T-cell (primary cell): ENCODE measurements at regions of chr9 and their contacts with region 1.

Region 1: GRCh38 chr9:137223078-137223970 is 1.3 kb upstream of the RNF208 start:
- DNase-seq: peak; percentile 94 to 99 (median 98)
- ATAC-seq: peak; percentile 91 to 94 (median 92)
- H3K4me3 ChIP-seq: peak overlapping the region; percentile 76 to 79
- H3K4me3 Mint-ChIP-seq: peak overlapping the region; percentile 71 to 80 (median 79)
- H3K27ac ChIP-seq: peak overlapping the region; percentile 83
- H3K27ac Mint-ChIP-seq: peak overlapping the region; percentile 67 to 80
- H3K4me1 ChIP-seq: peaks cover 2 to 37% of the 10 kb centered on the region in 2 experiments
- H3K4me1 Mint-ChIP-seq: peaks cover 6 to 8% (median 7%) of the 10 kb centered on the region in 3 donors
- H3K27me3 ChIP-seq: peaks cover 0 to 27% of the 10 kb centered on the region in 2 experiments
- H3K27me3 Mint-ChIP-seq: peaks cover 3 to 4% of the 10 kb centered on the region in 2 donors

Region 2: DNA sequence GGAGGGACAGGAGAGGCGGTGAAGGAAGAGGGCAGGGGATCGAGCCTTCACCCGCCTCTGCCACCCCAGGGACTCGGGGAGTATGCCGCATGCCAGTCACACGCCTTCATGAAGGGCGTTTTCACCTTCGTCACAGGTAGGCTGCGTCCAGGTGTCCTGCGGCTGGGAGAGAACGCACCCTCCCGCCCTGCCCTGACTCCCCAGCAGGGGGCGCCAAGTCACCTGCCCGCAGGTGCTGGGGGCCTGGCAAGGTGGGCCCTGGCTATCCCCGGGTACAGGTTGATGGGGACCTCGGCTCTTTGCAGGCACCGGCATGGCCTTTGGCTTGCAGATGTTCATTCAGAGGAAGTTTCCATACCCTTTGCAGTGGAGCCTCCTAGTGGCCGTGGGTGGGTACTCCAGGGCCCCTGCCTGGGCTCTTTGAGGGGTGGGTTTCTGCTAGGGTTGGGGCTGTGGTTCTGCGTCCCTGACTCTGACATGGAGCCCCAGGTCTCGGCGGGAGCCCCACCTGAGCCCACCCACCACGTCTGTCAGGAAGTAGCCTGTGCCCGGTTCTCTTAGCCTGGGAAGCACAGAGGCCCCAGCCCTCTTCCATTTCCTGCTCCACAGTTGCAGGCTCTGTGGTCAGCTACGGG is 431.6 kb before region 1 on chr9:
- CTCF ChIA-PET with region 1: no interaction called
- POLR2A ChIA-PET with region 1: interaction called in 1 of 2 experiments, 10 read pairs
- DNase-seq: peak; percentile 40 to 78 (median 63)
- ATAC-seq: peak; percentile 12 to 29 (median 16)
- H3K4me3 ChIP-seq: peak overlapping the region; percentile 75 to 86
- H3K4me3 Mint-ChIP-seq: peak overlapping the region; percentile 78 to 82 (median 80)
- H3K27ac ChIP-seq: peak overlapping the region; percentile 97
- H3K27ac Mint-ChIP-seq: peak overlapping the region; percentile 89 to 91
- H3K4me1 ChIP-seq: peaks cover 7 to 45% of the 10 kb centered on the region in 2 experiments
- H3K4me1 Mint-ChIP-seq: peaks cover 21 to 38% (median 30%) of the 10 kb centered on the region in 3 donors
- H3K27me3 ChIP-seq: no peaks in the 10 kb centered on the region
- H3K27me3 Mint-ChIP-seq: peaks cover 0 to 3% of the 10 kb centered on the region in 2 donors

Region 3: DNA sequence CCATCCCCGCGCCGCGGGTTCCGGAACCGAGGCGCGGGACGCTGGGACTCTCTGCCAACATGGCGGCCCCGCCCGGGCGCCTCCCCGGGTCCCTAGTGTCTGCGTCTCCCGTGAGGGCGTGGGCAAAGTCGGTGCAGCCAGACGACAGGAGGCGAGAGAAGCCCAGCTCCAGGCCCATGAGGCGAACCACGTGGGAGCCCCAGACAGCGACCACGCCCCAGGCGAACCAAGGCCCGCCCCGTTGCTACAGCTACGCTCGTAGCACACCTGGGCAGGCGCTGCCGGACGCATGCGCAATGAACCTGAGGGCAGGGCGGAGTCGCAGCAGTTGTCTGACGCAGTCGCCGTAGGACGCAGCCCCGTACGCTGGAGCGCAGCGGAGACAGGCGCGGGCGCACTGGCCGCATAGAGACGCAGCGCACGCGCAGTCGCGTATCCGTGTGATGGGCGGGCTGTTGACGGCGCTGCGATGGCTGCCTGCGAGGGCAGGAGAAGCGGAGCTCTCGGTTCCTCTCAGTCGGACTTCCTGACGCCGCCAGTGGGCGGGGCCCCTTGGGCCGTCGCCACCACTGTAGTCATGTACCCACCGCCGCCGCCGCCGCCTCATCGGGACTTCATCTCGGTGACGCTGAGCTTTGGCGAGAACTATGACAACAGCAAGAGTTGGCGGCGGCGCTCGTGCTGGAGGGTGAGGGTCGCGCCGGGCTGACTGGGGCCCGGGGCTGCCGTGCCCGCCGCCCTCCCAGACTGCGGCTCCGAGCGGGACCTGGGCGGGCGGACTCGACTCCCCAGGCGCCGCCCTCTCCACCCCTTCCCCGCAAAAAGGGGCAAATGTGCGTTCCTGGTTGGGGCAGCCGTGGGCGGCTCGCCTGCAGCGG is 136.6 kb before region 1 on chr9 and contains the start of gene MAN1B1:
- CTCF ChIA-PET with region 1: interaction called, 3 to 14 read pairs
- POLR2A ChIA-PET with region 1: no interaction called
- DNase-seq: peak; percentile 93 to 100 (median 99)
- ATAC-seq: peak; percentile 85 to 90 (median 86)
- H3K4me3 ChIP-seq: peak within 1 kb of the TSS; percentile 67 to 75
- H3K4me3 Mint-ChIP-seq: peak within 1 kb of the TSS; percentile 79 to 93 (median 89)
- H3K27ac ChIP-seq: peak within 1 kb of the TSS; percentile 78
- H3K27ac Mint-ChIP-seq: peak within 1 kb of the TSS; percentile 88 to 94
- H3K4me1 ChIP-seq: peaks cover 13 to 31% of the 10 kb centered on the region in 2 experiments
- H3K4me1 Mint-ChIP-seq: peaks cover 28 to 40% (median 32%) of the 10 kb centered on the region in 3 donors
- H3K27me3 ChIP-seq: peaks cover 0 to 3% of the 10 kb centered on the region in 2 experiments
- H3K27me3 Mint-ChIP-seq: no peaks in the 10 kb centered on the region
- total RNA-seq, gene MAN1B1: 62.0 to 91.5 (median 84.8) TPM

Region 4: DNA sequence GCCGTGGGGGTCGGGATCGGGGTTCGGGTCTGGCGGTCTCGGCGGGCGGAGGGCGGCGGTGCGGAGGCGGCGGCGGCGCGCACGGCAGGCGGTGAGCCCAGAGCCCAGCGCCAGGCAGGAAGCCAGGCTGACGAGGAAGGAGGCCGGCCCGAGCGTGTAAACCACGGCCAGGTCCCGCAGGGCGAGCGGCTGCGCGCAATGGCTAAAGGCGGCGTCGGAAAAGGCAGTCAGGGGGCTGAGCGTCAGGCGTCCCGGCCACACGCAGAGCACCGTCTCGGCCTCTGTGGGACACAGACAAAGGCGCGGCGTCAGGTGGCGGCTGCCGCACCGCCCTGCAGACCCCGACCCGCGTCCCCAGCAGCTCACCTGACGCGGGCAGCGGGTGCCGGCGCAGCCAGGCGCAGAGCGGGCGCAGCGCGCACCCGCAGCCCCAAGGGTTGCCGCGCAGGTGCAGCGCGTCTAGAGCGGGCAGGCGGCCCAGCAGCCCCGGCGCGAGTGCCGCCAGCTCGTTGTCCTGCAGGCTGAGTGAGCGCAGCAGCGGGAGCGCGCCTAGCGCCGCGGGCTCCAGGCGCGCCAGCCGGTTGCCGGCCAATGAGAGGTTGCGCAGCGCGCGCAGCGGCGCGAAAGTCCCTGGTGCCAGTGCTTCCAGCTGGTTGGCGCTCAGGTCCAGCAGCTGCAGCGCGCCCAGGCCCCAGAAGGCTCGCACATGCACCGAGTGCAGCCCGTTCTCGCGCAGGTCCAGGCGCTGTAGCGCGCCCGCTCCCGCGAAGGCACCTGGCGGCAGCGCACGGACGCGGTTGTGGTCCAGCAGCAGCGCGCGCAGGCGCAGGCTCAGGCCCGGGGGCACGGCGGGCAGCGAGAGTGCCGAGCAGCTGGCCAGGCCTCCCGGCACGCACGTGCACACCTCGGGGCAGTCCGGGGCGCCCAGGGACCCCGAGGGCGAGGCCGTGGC is 54.1 kb before region 1 on chr9:
- CTCF ChIA-PET with region 1: no interaction called
- POLR2A ChIA-PET with region 1: interaction called in 1 of 2 experiments, 10 read pairs
- DNase-seq: peak in 2 of 35 experiments; percentile 15 to 17
- ATAC-seq: peak in 3 of 4 experiments; percentile 34 to 64 (median 51)
- H3K4me3 ChIP-seq: peak overlapping the region in 1 of 2 donors; percentile 38
- H3K4me3 Mint-ChIP-seq: peak overlapping the region in 2 of 3 donors; percentile 45 to 55
- H3K27ac ChIP-seq: no peak overlapping the region
- H3K27ac Mint-ChIP-seq: no peak overlapping the region
- H3K4me1 ChIP-seq: peaks cover 0 to 15% of the 10 kb centered on the region in 2 experiments
- H3K4me1 Mint-ChIP-seq: peaks cover 0 to 6% (median 0%) of the 10 kb centered on the region in 3 donors
- H3K27me3 ChIP-seq: peaks cover 6 to 94% of the 10 kb centered on the region in 2 experiments
- H3K27me3 Mint-ChIP-seq: peaks cover 9 to 43% of the 10 kb centered on the region in 2 donors

Region 5: GRCh38 chr9:137240861-137241489 is 17.7 kb after region 1 on chr9 and contains the start of gene TUBB4B:
- CTCF ChIA-PET with region 1: interaction called in 1 of 2 experiments, 9 read pairs
- POLR2A ChIA-PET with region 1: interaction called in 1 of 2 experiments, 16 read pairs
- DNase-seq: peak; percentile 88 to 100 (median 98)
- ATAC-seq: peak; percentile 71 to 79 (median 76)
- H3K4me3 ChIP-seq: peak within 1 kb of the TSS; percentile 59 to 68
- H3K4me3 Mint-ChIP-seq: peak within 1 kb of the TSS; percentile 84 to 90 (median 85)
- H3K27ac ChIP-seq: peak within 1 kb of the TSS; percentile 70
- H3K27ac Mint-ChIP-seq: peak within 1 kb of the TSS; percentile 90 to 95
- H3K4me1 ChIP-seq: peaks cover 4 to 68% of the 10 kb centered on the region in 2 experiments
- H3K4me1 Mint-ChIP-seq: peaks cover 29 to 40% (median 33%) of the 10 kb centered on the region in 3 donors
- H3K27me3 ChIP-seq: no peaks in the 10 kb centered on the region
- H3K27me3 Mint-ChIP-seq: no peaks in the 10 kb centered on the region
- total RNA-seq, gene TUBB4B: 50.6 to 118 (median 95.3) TPM

Region 6: DNA sequence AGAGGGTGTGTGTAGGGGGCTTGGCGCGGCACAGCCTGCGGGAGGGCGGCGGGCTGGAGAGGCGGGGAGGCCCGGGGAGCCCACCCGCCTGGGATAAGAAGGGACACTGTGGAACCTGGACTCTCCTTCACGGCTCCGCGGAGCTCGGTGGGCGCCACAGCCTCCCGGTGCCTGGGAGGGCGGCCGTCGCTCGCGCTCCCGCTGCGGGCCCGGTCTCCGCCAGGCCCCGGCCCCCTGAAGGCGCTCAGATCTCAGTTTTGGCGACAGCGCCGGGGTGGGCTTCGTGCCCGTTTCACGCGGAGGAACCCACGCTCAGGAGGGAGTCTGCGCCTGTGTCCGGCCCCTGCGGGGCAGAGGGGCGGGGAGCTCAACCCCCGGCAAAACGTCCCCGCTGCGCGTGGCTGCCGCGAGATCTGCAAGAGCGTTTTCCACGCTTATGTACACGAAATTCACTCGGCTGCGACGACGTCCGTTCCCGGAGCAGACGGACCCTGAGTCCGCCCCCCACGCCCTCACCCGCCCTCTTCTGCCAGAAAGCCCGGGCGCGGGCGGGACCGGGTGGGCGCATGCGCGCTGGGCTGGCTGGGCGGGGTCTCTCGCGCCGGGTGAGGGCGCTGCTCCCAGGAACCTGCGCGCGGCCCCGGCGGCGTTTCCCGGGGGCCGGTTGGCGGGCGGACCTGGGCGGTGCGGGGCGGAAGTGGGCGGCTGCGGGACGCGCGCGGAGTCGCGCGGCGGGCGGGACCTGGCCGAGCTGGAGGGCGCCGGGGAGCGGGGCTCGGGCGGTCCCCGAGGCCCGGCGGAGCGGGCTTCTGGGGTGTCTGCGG is 31.5 kb after region 1 on chr9 and contains the start of gene NELFB:
- CTCF ChIA-PET with region 1: no interaction called
- POLR2A ChIA-PET with region 1: no interaction called
- DNase-seq: peak; percentile 81 to 98 (median 92)
- ATAC-seq: peak; percentile 89 to 93 (median 90)
- H3K4me3 ChIP-seq: peak within 1 kb of the TSS; percentile 75 to 87
- H3K4me3 Mint-ChIP-seq: peak within 1 kb of the TSS; percentile 82 to 90 (median 85)
- H3K27ac ChIP-seq: peak within 1 kb of the TSS; percentile 23
- H3K27ac Mint-ChIP-seq: peak within 1 kb of the TSS; percentile 81 to 83
- H3K4me1 ChIP-seq: peaks cover 4 to 28% of the 10 kb centered on the region in 2 experiments
- H3K4me1 Mint-ChIP-seq: peaks cover 11 to 16% (median 15%) of the 10 kb centered on the region in 3 donors
- H3K27me3 ChIP-seq: no peaks in the 10 kb centered on the region
- H3K27me3 Mint-ChIP-seq: no peaks in the 10 kb centered on the region
- total RNA-seq, gene NELFB: 36.1 to 62.2 (median 58.8) TPM